Activated CD4-positive, alpha-beta memory T cell treated with anti-CD3 and anti-CD28 coated beads for 36 hours (primary cell): ENCODE measurements at regions of chr15 and their contacts with region 1.

Region 1: DNA sequence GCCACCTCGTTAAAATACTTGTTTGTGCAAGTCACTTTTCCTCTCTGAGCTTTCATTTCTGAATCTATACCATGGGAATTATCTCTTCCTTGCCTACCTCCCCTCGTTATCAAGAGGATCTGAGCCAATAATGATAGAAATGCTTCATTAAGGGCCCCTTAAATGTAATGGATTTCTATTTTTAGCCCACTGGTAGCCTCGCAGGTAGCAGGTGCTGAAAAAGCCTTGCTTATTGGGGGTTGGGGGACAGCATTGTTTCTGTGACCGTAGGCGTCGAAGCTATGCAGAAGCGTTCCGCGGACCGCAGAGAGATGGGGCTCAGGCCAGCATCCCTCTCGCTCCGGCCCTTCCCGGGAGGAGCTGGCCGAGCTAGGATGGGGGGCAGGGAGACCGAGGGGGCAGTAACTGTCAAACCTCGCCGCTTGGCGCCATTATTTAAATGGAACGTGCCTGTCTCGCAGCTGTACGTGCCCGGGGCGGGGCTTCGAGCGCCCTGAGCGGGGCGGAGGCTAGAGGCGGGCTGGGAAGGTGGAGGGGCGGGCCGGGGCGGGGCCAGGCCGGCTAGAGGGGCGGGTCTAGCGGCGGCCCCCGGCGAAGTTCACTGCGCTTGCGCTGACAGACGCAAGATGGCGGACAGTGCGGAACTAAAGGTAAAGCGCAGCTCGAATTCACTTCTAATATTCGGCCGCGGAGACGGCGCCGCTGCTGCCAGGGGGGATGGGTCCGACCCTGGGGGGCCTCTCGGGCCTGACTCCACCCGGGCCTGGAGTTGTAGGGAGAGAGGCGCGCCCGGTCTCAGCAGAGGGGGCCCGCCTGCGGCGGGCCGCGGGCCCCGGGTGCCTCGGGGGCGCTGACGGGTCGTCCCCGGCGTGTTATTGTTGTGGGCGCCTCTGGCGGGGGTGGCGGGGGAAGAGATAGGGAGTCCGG is at the start of gene PIAS1:
- DNase-seq: peak; percentile 96
- H3K4me3 Mint-ChIP-seq: peak within 1 kb of the TSS; percentile 98
- H3K27ac Mint-ChIP-seq: peak within 1 kb of the TSS; percentile 92
- H3K4me1 Mint-ChIP-seq: peaks cover 49% of the 10 kb centered on the region
- H3K27me3 Mint-ChIP-seq: peaks cover 7% of the 10 kb centered on the region
- total RNA-seq, gene PIAS1: 29.4 to 30.9 TPM

Region 2: DNA sequence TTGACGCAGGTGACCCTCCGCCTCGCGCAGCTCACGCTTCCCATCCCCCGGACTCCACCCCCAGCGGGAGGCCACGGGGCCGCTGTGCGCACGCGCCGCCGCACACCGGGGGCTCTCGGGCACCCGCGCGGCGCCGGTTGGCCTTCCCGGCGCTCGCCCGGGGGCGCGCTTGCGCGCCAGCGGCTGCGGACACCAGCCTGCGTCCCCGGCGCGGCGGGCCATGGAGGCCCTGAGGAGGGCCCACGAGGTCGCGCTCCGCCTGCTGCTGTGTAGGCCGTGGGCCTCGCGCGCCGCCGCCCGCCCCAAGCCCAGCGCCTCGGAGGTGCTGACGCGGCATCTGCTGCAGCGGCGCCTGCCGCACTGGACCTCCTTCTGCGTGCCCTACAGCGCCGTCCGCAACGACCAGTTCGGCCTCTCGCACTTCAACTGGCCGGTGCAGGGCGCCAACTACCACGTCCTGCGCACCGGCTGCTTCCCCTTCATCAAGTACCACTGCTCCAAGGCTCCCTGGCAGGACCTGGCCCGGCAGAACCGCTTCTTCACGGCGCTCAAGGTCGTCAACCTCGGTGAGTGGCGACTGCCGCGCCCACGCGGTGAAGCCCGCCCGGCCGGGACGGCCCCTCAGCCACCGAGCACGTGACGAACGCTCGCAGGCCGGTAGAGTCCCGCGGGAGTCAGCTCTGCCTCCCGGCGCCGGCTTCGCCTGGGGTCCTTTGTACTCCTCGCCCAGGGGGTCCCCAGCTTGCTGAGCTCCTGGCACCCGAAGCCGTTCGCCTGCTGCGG is 532.7 kb before region 1 on chr15 and contains the start of gene C15orf61:
- CTCF ChIA-PET with region 1: no interaction called
- POLR2A ChIA-PET with region 1: no interaction called
- intact Hi-C with region 1: loop called (anchors 10 kb)
- DNase-seq: peak; percentile 92
- H3K4me3 Mint-ChIP-seq: peak within 1 kb of the TSS; percentile 96
- H3K27ac Mint-ChIP-seq: peak within 1 kb of the TSS; percentile 99
- H3K4me1 Mint-ChIP-seq: peaks cover 23% of the 10 kb centered on the region
- H3K27me3 Mint-ChIP-seq: no peaks in the 10 kb centered on the region
- total RNA-seq, gene C15orf61: 4.1 to 4.3 TPM

Region 3: DNA sequence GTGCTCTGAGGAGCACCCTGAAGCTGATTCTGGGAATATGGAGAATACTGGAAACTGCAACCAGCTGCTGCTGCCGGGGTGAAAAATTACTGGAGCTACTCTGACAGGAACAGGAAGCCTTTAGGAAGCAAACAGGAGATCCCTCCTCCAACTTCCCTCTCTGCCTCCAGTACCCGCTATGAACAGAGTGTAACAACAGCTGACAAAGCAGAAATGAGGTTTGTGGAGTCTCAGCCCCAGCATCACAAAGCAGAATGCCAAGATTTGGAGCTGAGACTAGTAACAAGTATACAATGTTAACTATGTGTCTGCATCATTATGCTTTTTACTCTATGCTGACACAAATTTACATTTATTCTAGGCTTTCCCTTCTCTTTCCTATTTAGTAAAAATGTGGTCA is 22.6 kb before region 1 on chr15:
- CTCF ChIA-PET with region 1: no interaction called
- POLR2A ChIA-PET with region 1: no interaction called
- intact Hi-C with region 1: no loop called
- DNase-seq: no peak
- H3K4me3 Mint-ChIP-seq: no peak overlapping the region
- H3K27ac Mint-ChIP-seq: no peak overlapping the region
- H3K4me1 Mint-ChIP-seq: no peaks in the 10 kb centered on the region
- H3K27me3 Mint-ChIP-seq: peaks cover 25% of the 10 kb centered on the region

Region 4: GRCh38 chr15:68097029-68097428 is 43.1 kb after region 1 on chr15:
- CTCF ChIA-PET with region 1: no interaction called
- POLR2A ChIA-PET with region 1: no interaction called
- intact Hi-C with region 1: no loop called
- DNase-seq: no peak
- H3K4me3 Mint-ChIP-seq: no peak overlapping the region
- H3K27ac Mint-ChIP-seq: no peak overlapping the region
- H3K4me1 Mint-ChIP-seq: peaks cover 49% of the 10 kb centered on the region
- H3K27me3 Mint-ChIP-seq: no peaks in the 10 kb centered on the region

Region 5: DNA sequence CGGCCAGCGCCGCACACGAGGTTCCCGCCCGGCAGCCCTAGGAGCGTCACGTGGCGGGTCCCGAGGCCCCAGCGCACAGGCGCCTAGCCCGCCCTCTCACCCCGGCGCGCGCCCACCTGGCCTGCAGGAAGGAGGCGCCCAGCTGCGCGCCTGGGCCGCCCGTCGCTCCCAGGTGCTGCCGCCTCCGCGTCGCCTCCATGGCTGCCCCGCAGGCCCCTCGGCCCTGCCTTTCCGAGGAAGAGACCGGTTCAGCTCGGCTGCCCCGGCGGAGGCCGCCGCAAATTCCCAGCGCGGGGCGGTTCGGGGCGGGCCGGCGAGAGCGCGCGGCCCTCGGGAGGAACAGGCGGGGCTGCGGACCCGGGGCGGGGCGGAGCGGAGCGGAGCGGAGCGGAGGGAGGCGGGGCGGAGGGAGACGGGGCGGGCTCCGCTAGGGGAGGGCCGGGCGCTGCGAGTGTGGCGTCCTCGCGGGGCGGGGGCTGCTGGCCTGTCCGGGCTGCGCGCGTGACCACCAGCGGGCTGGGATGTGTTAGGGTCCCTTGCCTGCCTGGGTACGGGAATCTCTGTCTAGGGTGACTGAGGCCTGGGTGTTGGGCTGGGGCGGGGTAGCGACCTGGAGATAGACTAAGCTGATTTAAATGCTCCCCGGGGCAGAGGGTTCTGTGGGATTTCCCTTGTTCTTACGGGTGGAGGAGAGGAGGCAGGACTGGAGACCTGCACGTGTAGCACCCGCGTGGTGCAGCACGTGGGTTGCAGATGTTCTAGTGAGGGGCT is 175.6 kb after region 1 on chr15 and contains the start of gene CLN6:
- CTCF ChIA-PET with region 1: no interaction called
- POLR2A ChIA-PET with region 1: interaction called, 13 read pairs
- intact Hi-C with region 1: loop called (anchors 1 kb)
- DNase-seq: peak; percentile 83
- H3K4me3 Mint-ChIP-seq: peak within 1 kb of the TSS; percentile 84
- H3K27ac Mint-ChIP-seq: peak within 1 kb of the TSS; percentile 72
- H3K4me1 Mint-ChIP-seq: peaks cover 34% of the 10 kb centered on the region
- H3K27me3 Mint-ChIP-seq: no peaks in the 10 kb centered on the region
- total RNA-seq, gene CLN6: 32.9 to 34.2 TPM